ENCODE measurements at regions of chr16 and their contacts with region 1.

Region 1: DNA sequence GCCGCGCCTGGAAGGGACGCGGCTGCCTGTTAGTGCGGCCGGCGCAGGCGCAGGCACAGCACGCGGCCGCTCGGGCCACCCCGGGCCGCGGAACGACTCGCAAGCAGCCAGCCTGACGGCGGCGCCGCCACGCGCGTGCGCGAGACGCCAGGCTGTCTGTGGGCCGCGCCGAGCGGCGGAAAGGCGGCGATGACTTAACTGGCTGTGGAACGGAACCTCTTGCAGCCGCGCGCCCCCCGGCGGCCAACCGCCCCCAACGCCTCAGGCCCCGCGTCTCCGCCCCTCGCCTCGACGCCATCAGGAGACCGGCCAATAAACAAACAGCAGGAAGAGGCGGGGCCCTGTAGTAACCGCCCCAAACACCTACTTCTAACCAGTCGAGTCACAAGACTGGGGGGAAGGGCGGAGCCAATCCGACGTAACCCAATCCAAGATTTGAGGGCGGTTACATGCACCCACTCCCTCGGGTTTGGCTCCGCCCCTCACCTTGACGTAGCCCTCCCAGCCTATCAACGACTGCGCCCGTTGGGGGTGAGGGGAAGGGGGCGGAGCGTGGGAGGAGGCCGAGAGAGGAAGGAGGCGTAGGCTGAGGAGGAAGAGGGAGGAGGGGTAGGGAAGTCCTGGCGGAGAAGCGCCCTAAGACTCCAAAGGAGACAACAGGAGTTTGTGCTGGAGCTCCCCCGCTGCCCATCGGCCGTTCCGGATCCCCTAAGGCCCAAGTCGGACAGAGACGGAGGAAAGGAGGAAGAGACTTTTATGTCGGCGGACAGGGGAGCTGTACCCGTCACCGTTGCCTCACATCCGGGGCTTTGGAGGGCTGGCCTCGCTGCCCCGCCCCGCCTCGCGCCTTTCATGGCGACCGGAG is at the start of gene FBRS:
- DNase-seq: peak; percentile 100
- H3K4me3 Mint-ChIP-seq: peak within 1 kb of the TSS; percentile 94
- H3K27ac Mint-ChIP-seq: peak within 1 kb of the TSS; percentile 100
- H3K4me1 Mint-ChIP-seq: peaks cover 38% of the 10 kb centered on the region
- H3K27me3 Mint-ChIP-seq: no peaks in the 10 kb centered on the region
- total RNA-seq, gene FBRS: 121 and 124 TPM in 2 replicates

Region 2: GRCh38 chr16:30378236-30379204 is 279.6 kb before region 1 on chr16:
- intact Hi-C with region 1: loop called (anchors 2 kb)
- DNase-seq: peak; percentile 99
- H3K4me3 Mint-ChIP-seq: peak overlapping the region; percentile 99
- H3K27ac Mint-ChIP-seq: peak overlapping the region; percentile 100
- H3K4me1 Mint-ChIP-seq: peaks cover 43% of the 10 kb centered on the region
- H3K27me3 Mint-ChIP-seq: no peaks in the 10 kb centered on the region

Region 3: DNA sequence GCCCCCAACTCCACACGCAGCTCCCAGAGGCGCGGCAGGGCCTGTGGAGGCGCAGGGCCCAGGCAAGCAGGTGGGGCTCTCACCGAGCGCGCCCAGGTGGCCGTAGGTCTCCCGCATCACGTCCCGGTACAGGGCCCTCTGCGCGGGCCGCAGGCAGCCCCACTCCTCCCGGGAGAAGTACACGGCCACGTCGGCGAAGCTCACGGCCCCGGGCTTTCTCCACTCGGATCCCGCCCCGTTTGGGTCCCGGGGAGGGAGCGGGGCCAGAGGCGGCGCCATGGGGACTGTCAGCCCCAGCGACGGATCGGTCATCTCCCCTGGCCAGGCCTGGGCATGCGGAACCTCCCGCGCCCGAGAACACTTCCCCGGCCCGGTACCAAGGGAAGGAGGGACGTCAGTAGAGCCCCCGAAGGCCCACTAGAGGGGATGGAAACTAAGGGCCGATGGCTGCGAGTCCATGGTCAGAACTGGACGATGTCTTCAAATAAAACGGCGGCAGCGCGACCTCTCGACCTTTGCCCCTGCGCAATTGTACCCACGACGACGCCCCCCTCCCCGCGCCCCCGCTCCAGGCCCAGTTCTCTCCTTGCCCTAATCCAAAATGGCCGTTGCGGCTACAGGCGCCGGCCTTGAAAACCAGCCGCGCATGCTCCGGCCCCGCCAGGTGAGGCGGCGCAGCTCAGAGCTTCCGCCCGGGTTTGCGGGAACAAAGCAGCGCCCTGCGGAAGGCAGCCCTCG is 123.6 kb before region 1 on chr16 and contains the start of gene ZNF747:
- intact Hi-C with region 1: loop called (anchors 2 kb)
- DNase-seq: peak; percentile 98
- H3K4me3 Mint-ChIP-seq: peak within 1 kb of the TSS; percentile 88
- H3K27ac Mint-ChIP-seq: peak within 1 kb of the TSS; percentile 97
- H3K4me1 Mint-ChIP-seq: peaks cover 31% of the 10 kb centered on the region
- H3K27me3 Mint-ChIP-seq: no peaks in the 10 kb centered on the region
- total RNA-seq, gene ZNF747: 10.5 and 13.6 TPM in 2 replicates

Region 4: DNA sequence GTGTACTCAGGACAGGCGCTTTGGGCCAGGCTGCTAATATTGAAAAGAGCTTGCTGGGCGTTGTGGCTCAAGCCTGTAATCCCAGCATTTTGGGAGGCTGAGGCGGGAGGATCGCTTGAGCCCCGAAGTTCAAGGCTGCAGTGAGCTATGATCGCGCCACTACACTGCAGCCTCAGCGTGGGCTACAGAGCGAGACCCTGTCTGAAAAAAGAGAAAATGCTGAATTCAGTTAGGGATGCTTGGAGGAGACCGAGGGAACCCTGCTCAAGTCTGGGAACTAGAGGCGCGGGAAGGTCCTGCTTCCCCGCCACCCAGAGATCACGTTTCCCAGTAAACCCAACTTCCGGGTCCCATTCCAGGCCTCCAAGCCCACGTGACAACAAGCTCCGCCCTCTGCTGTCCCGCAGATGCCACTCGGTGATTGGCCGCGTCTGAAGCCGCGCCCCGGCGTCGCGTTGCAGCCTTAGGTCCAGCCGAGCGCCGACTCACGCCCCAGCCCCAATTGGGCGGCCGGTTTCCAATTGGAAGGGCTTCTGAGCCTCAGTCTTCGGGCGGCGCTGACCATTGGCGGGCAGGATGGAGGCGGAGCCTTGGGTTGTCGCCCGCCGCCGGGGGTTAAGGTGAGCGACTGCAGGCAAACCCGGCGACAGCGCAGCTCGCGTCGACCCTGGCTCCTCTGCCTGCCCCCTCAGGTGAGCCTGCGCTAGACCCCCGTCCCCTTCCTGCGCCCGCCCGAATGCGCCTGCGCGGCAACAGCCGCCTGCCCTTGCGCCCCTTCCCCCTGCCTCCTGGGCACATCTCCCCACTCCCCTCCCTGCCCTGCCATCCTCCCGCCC is 89.9 kb after region 1 on chr16 and contains the start of gene PHKG2:
- intact Hi-C with region 1: loop called (anchors 10 kb)
- DNase-seq: peak; percentile 99
- H3K4me3 Mint-ChIP-seq: peak within 1 kb of the TSS; percentile 94
- H3K27ac Mint-ChIP-seq: peak within 1 kb of the TSS; percentile 85
- H3K4me1 Mint-ChIP-seq: peaks cover 21% of the 10 kb centered on the region
- H3K27me3 Mint-ChIP-seq: no peaks in the 10 kb centered on the region
- total RNA-seq, gene PHKG2: 39.5 and 41.0 TPM in 2 replicates

Region 5: GRCh38 chr16:30797670-30798309 is 139.7 kb after region 1 on chr16:
- intact Hi-C with region 1: no loop called
- DNase-seq: no peak
- H3K4me3 Mint-ChIP-seq: no peak overlapping the region
- H3K27ac Mint-ChIP-seq: peak overlapping the region; percentile 34
- H3K4me1 Mint-ChIP-seq: peaks cover under 1% of the 10 kb centered on the region
- H3K27me3 Mint-ChIP-seq: peaks cover 2% of the 10 kb centered on the region

Region 6: GRCh38 chr16:30813821-30814189 is 155.7 kb after region 1 on chr16:
- intact Hi-C with region 1: no loop called
- DNase-seq: no peak
- H3K4me3 Mint-ChIP-seq: peak overlapping the region; percentile 96
- H3K27ac Mint-ChIP-seq: peak overlapping the region; percentile 84
- H3K4me1 Mint-ChIP-seq: peaks cover 10% of the 10 kb centered on the region
- H3K27me3 Mint-ChIP-seq: peaks cover 2% of the 10 kb centered on the region

Region 7: DNA sequence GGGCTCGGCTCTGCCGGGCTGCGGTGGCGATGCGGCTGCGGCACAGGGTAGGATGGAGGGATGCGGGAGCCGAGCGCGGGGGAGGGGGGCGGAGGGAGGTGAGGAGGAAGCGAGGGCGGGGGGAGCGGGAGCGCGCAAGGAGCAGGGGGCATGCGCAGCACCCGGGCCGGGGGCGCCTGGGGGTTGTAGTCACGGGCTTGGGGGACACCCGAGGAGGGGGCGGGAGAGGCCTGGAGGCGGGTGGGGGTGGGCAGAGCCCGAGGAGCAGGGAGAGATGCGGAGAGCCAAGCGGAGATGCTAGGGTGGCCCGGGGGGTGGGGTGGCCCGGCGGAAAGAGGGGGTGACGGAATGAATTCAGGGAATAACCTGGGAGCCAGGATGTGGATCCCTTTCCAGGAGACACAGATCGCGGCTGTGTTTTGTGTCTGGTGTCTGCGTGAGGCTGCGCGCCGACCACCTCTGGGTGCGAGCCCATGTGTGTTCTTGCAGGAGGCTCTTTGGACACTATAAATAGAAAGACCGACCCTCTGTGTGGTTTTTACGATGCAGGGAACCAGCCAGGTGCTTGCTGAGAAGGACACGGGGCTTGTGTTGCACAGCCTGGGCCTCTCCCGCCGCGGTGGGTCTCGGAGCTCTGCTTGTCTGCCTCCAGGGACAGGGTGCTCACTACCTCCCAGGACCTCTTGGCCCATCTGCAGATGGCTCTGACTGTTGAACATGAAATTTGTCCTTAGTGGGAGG is 352.7 kb after region 1 on chr16 and contains the start of gene STX1B:
- intact Hi-C with region 1: no loop called
- DNase-seq: peak; percentile 80
- H3K4me3 Mint-ChIP-seq: peak within 1 kb of the TSS; percentile 58
- H3K27ac Mint-ChIP-seq: no peak within 1 kb of the TSS
- H3K4me1 Mint-ChIP-seq: peaks cover 17% of the 10 kb centered on the region
- H3K27me3 Mint-ChIP-seq: peaks cover 47% of the 10 kb centered on the region
- total RNA-seq, gene STX1B: 0.75 and 0.78 TPM in 2 replicates

Region 8: DNA sequence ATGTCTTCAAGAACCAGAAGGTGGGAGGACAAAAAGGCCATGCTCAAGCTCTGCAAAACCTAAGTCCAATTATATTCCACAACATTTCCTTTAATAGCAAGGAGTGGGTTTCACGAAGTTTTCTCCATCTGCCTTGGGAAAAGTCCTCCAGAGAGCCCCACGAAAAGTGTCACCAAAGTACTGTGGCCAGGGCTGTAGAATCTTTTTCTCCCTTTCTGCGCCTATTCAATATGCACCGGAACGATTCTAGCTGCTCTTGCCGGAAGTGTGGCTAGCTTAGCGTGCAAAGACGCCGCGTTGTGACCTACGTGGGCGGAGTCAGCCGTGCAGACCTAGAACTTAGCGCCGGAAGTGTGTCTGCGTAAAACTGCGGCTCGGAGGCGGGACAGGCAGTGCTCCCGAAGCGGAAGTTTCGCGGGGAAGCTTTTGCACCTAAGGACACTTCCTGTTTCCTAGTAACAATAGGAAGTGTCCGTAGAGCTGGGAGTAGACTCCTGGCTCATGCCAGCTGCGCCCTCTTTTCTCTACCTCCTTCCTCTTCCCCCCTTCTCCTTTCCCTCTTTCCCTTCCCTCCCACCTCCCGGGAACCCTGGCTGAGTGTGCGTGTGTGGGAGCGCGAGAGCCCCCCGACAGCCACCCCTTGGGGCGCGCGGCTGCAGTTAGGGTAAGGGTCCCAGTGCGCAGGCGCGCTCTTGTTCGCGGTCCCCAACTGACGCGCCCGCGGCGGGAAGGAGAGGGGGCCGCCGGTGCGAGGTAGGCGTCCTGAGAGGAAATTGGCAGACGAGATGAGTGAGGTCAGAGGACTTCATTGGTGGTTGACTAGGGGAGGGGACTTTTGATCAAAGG is 416.1 kb after region 1 on chr16 and contains the starts of genes ZNF646 and ZNF668:
- intact Hi-C with region 1: loop called (anchors 5 kb)
- DNase-seq: peak; percentile 99
- H3K4me3 Mint-ChIP-seq: peak within 1 kb of the TSS; percentile 90
- H3K27ac Mint-ChIP-seq: peak within 1 kb of the TSS; percentile 93
- H3K4me1 Mint-ChIP-seq: peaks cover 31% of the 10 kb centered on the region
- H3K27me3 Mint-ChIP-seq: no peaks in the 10 kb centered on the region
- total RNA-seq, gene ZNF646: 21.1 and 23.3 TPM in 2 replicates
- total RNA-seq, gene ZNF668: 15.6 and 15.9 TPM in 2 replicates

Measured in activated CD4-positive, alpha-beta T cell treated with anti-CD3 and anti-CD28 coated beads, Interleukin-2, amount 10 ng/mL, durations not matched to agents 24 days and 14 days (primary cell).